Dendritic cell treated with granulocyte-macrophage colony-stimulating factor and Interleukin-4, amounts not matched to agents 40 ng/mL and 50 ng/mL, for 4 days (primary cell): ENCODE measurements at regions of chr10 and their contacts with region 1.

Region 1: DNA sequence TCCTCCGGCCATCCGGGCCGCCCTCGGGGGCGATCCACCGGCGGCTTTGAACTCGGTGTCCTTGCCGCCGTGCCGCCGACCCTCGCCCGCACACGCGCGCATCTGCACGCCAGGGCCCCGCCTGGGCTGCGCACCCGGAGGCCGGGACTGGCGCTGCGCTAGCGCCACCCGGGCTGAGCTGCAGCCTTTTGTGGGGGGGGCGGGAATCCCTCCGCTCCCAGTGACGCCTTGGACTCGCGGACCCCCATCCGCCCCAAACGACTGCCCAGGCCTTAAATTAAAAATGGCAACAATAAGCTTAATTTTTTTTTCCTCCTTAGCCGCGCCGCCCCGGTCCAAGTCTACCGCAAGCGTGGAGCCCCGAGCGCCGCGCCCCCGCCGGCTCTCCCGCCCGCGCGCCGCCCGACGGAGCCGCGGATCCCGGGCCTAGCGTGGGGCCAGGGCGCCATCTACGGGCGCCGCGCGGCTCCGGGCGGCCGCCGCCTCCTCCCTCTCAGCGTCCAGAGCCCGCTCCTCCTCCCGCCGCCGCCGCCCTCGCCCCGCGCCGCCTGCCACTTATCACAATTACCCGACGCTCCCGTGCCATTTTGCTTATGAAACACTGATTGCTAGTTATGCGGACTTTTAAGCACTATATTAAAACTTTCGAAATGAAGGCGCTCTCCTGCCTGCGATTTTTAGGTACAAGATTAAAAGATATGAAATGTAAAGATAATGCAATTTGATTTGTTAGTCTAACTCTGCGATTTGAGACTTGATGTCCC is 7.5 kb upstream of the EBF3 start:
- H3K4me3 Mint-ChIP-seq: no peak overlapping the region
- H3K27ac Mint-ChIP-seq: no peak overlapping the region
- H3K4me1 Mint-ChIP-seq: peaks cover 13% of the 10 kb centered on the region
- H3K27me3 Mint-ChIP-seq: peaks cover 85% of the 10 kb centered on the region

Region 2: GRCh38 chr10:128263891-128264688 is 1707.5 kb before region 1 on chr10:
- intact Hi-C with region 1: loop called (anchors 10 kb)
- H3K4me3 Mint-ChIP-seq: no peak overlapping the region
- H3K27ac Mint-ChIP-seq: no peak overlapping the region
- H3K4me1 Mint-ChIP-seq: no peaks in the 10 kb centered on the region
- H3K27me3 Mint-ChIP-seq: peaks cover 63% of the 10 kb centered on the region

Region 3: DNA sequence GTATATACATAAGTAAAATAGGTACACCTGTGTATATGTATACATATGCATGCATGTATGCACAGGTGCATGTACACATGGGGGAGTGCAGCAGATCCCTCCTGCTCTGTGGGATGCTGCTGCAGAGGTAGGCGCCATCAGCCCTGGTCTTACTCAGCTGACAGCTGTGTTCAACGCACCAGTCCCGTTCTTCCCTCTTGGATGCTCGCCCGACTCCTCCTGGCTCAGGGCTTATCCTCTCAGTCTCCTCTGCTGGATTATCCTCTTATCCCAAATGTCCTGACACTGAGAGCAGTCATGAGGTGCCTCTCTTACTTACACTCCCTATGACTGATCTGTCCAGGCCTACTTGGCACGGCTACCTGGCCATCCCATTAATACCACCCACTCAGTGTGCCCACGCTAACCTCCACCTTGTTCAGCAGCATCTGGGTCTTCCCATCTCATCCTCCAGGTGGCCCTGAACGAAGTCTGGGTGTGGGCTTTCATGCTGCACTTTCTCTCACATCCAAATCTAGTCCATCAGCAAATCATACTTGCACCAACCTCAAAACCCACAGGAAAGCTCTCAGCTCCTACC is 982.9 kb after region 1 on chr10:
- intact Hi-C with region 1: no loop called
- H3K4me3 Mint-ChIP-seq: no peak overlapping the region
- H3K27ac Mint-ChIP-seq: no peak overlapping the region
- H3K4me1 Mint-ChIP-seq: no peaks in the 10 kb centered on the region
- H3K27me3 Mint-ChIP-seq: no peaks in the 10 kb centered on the region